ENCODE measurements at regions of chr19 and their contacts with region 1.

Region 1: GRCh38 chr19:50537762-50538230 is 24.1 kb upstream of the ASPDH start:
- DNase-seq: peak; percentile 64
- H3K4me3 Mint-ChIP-seq: no peak overlapping the region
- H3K27ac Mint-ChIP-seq: no peak overlapping the region
- H3K4me1 Mint-ChIP-seq: no peaks in the 10 kb centered on the region
- H3K27me3 Mint-ChIP-seq: no peaks in the 10 kb centered on the region

Region 2: DNA sequence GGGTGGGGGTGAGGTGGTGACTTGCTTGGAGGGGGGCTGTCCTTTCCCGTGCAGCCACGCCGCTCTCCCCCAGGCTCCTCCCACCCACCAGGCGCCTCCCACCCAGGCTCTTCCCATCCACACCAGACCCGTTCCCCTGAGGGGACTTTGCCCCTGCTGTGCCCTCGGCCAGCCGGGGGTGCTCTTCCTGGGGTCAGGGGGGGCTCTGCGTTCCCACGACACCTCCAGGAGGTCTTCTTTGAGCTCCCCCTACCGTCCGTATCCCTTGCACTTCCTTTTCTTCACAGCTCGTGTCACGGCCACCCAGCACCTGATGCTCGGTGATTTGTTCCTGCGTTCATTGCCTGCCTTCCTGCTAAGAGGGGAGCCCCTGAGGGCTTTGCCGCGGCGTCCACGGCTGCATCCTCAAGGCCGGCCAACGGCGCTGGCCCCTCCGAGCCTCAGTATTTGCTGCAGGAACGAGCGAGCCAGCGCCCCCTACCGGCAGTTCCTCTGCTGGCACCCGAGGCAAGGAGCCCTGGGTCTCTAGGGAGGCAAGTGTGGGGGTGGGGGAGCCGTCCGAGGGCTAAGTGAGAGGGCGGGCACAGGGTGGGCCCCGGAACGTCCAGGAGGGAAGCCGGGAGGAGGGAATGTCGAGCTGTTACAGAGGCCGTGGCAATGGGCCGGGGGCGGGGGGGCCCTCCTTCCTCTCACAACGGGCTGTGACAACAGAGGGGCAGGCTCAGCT is 18.6 kb after region 1 on chr19:
- CTCF ChIA-PET with region 1: interaction called, 14 read pairs
- POLR2A ChIA-PET with region 1: no interaction called
- DNase-seq: peak; percentile 79
- H3K4me3 Mint-ChIP-seq: peak overlapping the region; percentile 82
- H3K27ac Mint-ChIP-seq: peak overlapping the region; percentile 87
- H3K4me1 Mint-ChIP-seq: peaks cover 8% of the 10 kb centered on the region
- H3K27me3 Mint-ChIP-seq: peaks cover 39% of the 10 kb centered on the region

Region 3: DNA sequence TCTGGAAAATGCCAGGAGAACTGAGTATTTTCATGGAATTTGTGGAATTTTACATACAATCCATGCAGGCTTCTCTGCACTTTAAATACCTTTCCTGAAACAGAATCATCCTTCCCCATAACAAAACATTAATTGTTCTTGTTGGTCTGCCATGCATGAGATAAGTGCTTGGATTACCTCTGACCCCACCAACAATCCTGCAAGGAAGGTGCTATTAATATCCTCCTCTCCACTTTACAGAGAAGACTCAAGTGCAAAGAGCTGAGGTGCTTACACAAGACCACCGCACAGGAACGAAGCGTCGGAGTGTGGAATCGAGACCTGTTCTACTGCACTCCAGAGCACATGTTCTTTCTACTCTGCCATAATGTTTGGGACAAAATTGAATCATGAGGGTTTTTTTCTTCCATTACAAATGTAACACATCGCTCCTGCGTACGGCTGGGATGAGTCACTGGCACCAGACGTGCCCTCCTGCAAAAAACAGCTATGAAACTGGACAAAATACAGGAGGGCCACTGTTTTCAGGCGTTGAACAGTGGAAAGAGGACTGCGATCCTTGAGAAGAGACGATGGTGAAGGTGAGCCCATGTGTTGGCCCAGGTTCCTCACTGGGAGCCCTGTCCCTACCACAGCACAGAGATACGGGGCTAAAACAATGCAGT is 43.3 kb after region 1 on chr19:
- CTCF ChIA-PET with region 1: no interaction called
- POLR2A ChIA-PET with region 1: no interaction called
- DNase-seq: no peak
- H3K4me3 Mint-ChIP-seq: no peak overlapping the region
- H3K27ac Mint-ChIP-seq: no peak overlapping the region
- H3K4me1 Mint-ChIP-seq: no peaks in the 10 kb centered on the region
- H3K27me3 Mint-ChIP-seq: no peaks in the 10 kb centered on the region

Region 4: GRCh38 chr19:50952910-50953309 is 415.1 kb after region 1 on chr19 and contains the start of gene KLK5:
- CTCF ChIA-PET with region 1: no interaction called
- POLR2A ChIA-PET with region 1: no interaction called
- DNase-seq: no peak
- H3K4me3 Mint-ChIP-seq: no peak within 1 kb of the TSS
- H3K27ac Mint-ChIP-seq: peak within 1 kb of the TSS; percentile 3
- H3K4me1 Mint-ChIP-seq: no peaks in the 10 kb centered on the region
- H3K27me3 Mint-ChIP-seq: peaks cover 1% of the 10 kb centered on the region
- total RNA-seq, gene KLK5: not detected